ENCODE measurements at regions of chr12 and their contacts with region 1.

Region 1: DNA sequence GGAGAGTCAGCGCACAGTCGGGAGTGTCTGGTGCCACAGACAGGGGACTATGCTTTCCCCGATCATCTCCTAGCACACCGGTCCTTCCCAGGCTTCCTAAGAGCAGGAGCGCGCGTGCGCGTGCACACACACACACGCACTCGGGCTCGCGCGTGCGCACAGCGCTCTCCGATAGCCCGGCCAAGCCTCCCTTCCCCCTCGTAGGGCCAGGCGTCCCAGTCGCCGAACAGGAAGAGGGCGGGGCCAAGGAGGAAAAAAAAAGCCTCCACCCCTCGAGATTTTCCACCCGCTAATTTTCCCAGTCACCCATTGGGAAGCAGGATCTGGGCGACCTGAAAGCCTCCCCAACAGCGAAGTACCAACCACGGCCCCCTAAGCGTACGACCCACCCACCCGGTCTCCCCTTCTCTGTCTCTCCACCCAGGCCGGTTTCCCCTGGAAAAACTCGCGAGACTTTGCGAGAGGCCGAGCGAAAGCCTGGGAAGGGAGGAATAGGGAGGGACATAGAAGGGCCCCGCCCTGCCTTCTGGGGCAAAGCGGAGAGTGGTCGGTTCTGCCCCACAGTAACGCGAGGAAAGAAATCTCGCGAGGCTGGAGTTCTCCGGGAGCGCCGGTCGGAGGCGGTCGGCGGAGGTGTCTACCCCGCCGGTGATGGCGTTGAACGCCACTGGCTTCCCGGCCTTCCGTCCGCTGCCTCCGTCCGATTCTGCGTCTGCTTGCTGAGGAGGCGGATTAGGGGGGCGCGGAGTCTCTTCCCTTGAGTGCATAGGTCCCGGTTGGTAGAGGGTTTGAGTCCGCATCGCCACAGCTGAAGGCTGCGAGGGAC is at the starts of genes FGFR1OP2 and INTS13:
- DNase-seq: peak; percentile 89
- ATAC-seq: peak; percentile 92
- H3K4me3 Mint-ChIP-seq: peak within 1 kb of the TSS; percentile 99
- H3K27ac Mint-ChIP-seq: peak within 1 kb of the TSS; percentile 99
- H3K4me1 Mint-ChIP-seq: peaks cover 73% of the 10 kb centered on the region
- H3K27me3 Mint-ChIP-seq: no peaks in the 10 kb centered on the region
- CTCF ChIP-seq: no peak
- total RNA-seq, gene FGFR1OP2: 42.7 and 45.0 TPM in 2 replicates
- total RNA-seq, gene INTS13: 25.0 and 25.2 TPM in 2 replicates

Region 2: DNA sequence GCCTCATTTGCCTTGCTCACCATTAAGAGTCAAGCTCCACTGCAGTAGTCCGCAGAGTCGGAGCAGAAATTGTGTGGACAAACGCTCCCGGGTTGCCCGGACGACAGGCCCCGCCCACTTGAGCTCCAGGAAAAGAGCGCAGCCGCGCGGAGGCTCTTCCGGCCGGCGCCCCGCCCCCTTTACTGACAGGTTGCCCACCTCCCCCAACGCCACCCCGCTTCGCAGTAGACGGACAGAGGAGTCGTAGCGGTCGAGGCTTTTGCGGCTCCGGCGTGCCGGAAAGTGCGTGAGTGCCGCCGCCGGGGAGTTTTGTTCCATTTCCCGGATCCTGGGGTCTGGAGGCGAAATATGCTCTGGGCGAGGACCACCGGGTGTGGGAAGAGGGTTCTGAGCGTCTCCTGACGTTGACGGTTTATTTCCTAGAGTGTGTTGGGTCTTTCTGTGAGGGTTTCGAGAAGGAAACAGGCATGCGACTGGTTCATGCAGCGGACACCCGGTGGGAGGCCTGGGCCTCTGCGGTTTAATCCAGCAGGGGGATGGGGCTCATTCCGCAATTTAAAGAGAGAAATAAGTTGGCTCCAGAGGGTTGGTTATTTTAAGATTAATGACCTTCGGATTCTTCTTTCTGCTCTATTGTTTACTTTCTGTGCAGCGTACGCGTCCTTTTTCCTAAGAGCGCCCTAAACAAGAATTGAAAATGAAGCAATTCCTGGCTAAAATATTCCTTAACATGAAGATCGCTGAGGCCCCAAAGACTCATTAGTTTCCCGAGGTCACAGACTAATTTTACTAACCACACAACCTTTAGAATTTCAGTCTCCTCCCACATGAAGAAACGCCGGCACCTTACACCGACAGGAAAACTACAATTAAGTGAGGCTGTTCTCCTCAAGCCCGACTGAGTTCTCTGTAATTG is 1742.8 kb before region 1 on chr12 and contains the starts of genes DNAI7 and ETFRF1:
- CTCF ChIA-PET with region 1: no interaction called
- POLR2A ChIA-PET with region 1: no interaction called
- intact Hi-C with region 1: loop called (anchors 1 kb)
- DNase-seq: peak; percentile 98
- ATAC-seq: peak; percentile 97
- H3K4me3 Mint-ChIP-seq: peak within 1 kb of the TSS; percentile 94
- H3K27ac Mint-ChIP-seq: peak within 1 kb of the TSS; percentile 96
- H3K4me1 Mint-ChIP-seq: peaks cover 34% of the 10 kb centered on the region
- H3K27me3 Mint-ChIP-seq: no peaks in the 10 kb centered on the region
- CTCF ChIP-seq: no peak
- total RNA-seq, gene DNAI7: 0.15 and 0.27 TPM in 2 replicates
- total RNA-seq, gene ETFRF1: 15.4 and 17.6 TPM in 2 replicates

Region 3: GRCh38 chr12:25694072-25694471 is 1244.0 kb before region 1 on chr12:
- CTCF ChIA-PET with region 1: no interaction called
- POLR2A ChIA-PET with region 1: no interaction called
- intact Hi-C with region 1: no loop called
- DNase-seq: no peak
- ATAC-seq: no peak
- H3K4me3 Mint-ChIP-seq: no peak overlapping the region
- H3K27ac Mint-ChIP-seq: no peak overlapping the region
- H3K4me1 Mint-ChIP-seq: no peaks in the 10 kb centered on the region
- H3K27me3 Mint-ChIP-seq: peaks cover 14% of the 10 kb centered on the region
- CTCF ChIP-seq: no peak

Region 4: GRCh38 chr12:26153421-26154154 is 784.5 kb before region 1 on chr12:
- CTCF ChIA-PET with region 1: no interaction called
- POLR2A ChIA-PET with region 1: no interaction called
- intact Hi-C with region 1: loop called (anchors 2 kb)
- DNase-seq: no peak
- ATAC-seq: no peak
- H3K4me3 Mint-ChIP-seq: no peak overlapping the region
- H3K27ac Mint-ChIP-seq: peak overlapping the region; percentile 27
- H3K4me1 Mint-ChIP-seq: peaks cover 77% of the 10 kb centered on the region
- H3K27me3 Mint-ChIP-seq: no peaks in the 10 kb centered on the region
- CTCF ChIP-seq: no peak

Region 5: DNA sequence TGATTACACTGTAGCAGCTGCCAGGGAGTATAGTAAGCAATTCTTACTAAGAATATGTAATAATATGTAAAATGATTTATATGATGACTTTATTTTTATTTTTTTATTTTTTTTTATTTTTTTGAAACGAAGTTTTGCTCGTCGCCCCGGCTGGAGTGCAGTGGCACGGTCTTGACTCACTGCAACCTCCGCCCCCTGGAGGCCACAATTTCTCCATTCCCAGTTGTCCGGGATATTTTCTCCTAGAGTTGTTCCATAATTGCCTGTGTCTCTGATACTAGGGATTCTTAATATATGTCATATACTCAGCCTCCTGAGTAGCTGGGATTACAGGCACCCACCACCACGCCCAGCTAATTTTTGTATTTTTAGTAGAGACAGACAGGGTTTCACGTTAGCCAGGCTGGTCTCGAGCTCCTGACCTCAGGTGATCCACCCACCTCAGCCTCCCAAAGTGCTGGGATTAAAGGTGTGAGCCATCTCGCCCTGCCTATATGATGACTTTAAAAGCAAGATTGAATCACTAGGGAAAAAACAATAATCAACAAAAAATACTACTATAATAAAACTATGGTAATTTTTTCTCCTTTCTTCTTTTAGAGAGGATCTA is 92.9 kb before region 1 on chr12:
- CTCF ChIA-PET with region 1: no interaction called
- POLR2A ChIA-PET with region 1: no interaction called
- intact Hi-C with region 1: loop called (anchors 5 kb)
- DNase-seq: no peak
- ATAC-seq: peak; percentile 37
- H3K4me3 Mint-ChIP-seq: no peak overlapping the region
- H3K27ac Mint-ChIP-seq: no peak overlapping the region
- H3K4me1 Mint-ChIP-seq: peaks cover 20% of the 10 kb centered on the region
- H3K27me3 Mint-ChIP-seq: no peaks in the 10 kb centered on the region
- CTCF ChIP-seq: no peak

Region 6: GRCh38 chr12:27142101-27142721 is 204.1 kb after region 1 on chr12:
- CTCF ChIA-PET with region 1: no interaction called
- POLR2A ChIA-PET with region 1: no interaction called
- intact Hi-C with region 1: loop called (anchors 10 kb)
- DNase-seq: no peak
- ATAC-seq: peak; percentile 76
- H3K4me3 Mint-ChIP-seq: no peak overlapping the region
- H3K27ac Mint-ChIP-seq: no peak overlapping the region
- H3K4me1 Mint-ChIP-seq: peaks cover 12% of the 10 kb centered on the region
- H3K27me3 Mint-ChIP-seq: no peaks in the 10 kb centered on the region
- CTCF ChIP-seq: peak; percentile 43

Region 7: GRCh38 chr12:27193854-27194544 is 255.9 kb after region 1 on chr12:
- CTCF ChIA-PET with region 1: no interaction called
- POLR2A ChIA-PET with region 1: no interaction called
- intact Hi-C with region 1: no loop called
- DNase-seq: no peak
- ATAC-seq: no peak
- H3K4me3 Mint-ChIP-seq: no peak overlapping the region
- H3K27ac Mint-ChIP-seq: no peak overlapping the region
- H3K4me1 Mint-ChIP-seq: no peaks in the 10 kb centered on the region
- H3K27me3 Mint-ChIP-seq: no peaks in the 10 kb centered on the region
- CTCF ChIP-seq: no peak

Region 8: GRCh38 chr12:27305673-27306456 is 367.8 kb after region 1 on chr12:
- CTCF ChIA-PET with region 1: no interaction called
- POLR2A ChIA-PET with region 1: no interaction called
- intact Hi-C with region 1: loop called (anchors 5 kb)
- DNase-seq: no peak
- ATAC-seq: peak; percentile 34
- H3K4me3 Mint-ChIP-seq: no peak overlapping the region
- H3K27ac Mint-ChIP-seq: no peak overlapping the region
- H3K4me1 Mint-ChIP-seq: no peaks in the 10 kb centered on the region
- H3K27me3 Mint-ChIP-seq: no peaks in the 10 kb centered on the region
- CTCF ChIP-seq: peak; percentile 49